Esophagus muscularis mucosa (tissue), 4 donors: ENCODE measurements at regions of chr2 and their contacts with region 1.

Region 1: GRCh38 chr2:74482801-74483674 is at the starts of genes CCDC142 and TTC31:
- DNase-seq: peak; percentile 99
- H3K4me3 ChIP-seq: peak within 1 kb of the TSS; percentile 89 to 99 (median 92)
- H3K27ac ChIP-seq: peak within 1 kb of the TSS; percentile 85 to 96 (median 88)
- H3K4me1 ChIP-seq: peaks cover 26 to 44% (median 39%) of the 10 kb centered on the region in 4 donors
- H3K27me3 ChIP-seq: no peaks in the 10 kb centered on the region
- CTCF ChIP-seq: peak; percentile 80 to 88 (median 85)
- EP300 ChIP-seq: no peak
- POLR2A ChIP-seq: no peak
- total RNA-seq, gene CCDC142: 9.6 to 27.8 (median 19.2) TPM
- total RNA-seq, gene TTC31: 17.4 to 23.0 (median 20.6) TPM

Region 2: GRCh38 chr2:74178201-74179062 is 304.6 kb before region 1 on chr2 and contains the start of gene MOB1A:
- intact Hi-C with region 1: no loop called
- DNase-seq: peak; percentile 99
- H3K4me3 ChIP-seq: peak within 1 kb of the TSS; percentile 86 to 94 (median 89)
- H3K27ac ChIP-seq: peak within 1 kb of the TSS; percentile 93 to 98 (median 96)
- H3K4me1 ChIP-seq: peaks cover 34 to 50% (median 47%) of the 10 kb centered on the region in 4 donors
- H3K27me3 ChIP-seq: no peaks in the 10 kb centered on the region
- CTCF ChIP-seq: no peak
- EP300 ChIP-seq: no peak
- POLR2A ChIP-seq: peak; percentile 66
- total RNA-seq, gene MOB1A: 102 to 129 (median 106) TPM

Region 3: DNA sequence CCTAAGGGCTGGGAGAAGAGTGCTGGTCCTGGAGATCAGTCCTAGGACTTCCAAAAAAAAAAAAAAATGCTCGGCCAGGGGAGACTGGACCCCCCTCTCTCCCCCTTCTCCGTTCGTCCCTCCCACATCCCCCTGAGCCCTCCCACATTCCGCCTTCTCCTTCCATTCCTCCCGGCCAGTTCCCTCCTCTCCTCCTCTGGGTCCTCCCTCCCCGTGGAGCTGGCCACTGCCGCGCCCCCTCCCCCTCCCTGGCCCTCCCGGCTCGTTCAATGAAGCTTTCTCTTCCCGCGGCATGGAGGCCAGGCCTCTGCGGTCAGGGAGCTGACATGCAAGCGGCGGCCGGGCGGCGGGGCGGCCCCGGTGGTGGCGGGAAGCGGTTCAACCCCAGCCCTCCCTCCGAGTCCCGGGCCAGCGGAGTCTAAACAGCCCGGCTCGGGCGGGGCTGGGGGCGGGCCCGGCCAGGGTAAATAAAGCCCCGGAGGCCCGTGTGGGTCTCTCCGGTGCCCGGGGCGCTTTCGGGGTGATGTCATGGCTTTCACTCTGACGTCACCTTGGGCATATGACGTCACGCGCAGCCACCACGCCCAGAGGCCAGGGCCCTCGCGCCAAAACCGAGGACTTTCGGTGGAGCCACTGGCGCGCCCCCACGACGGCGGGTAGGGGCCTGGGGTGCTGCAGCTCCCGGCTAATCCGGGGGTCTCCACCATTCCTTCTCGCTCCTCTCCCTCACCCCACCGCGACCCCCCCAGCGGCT is 71.0 kb after region 1 on chr2 and contains the start of gene LOXL3:
- intact Hi-C with region 1: loop called (anchors 1 kb)
- DNase-seq: peak; percentile 95
- H3K4me3 ChIP-seq: peak within 1 kb of the TSS; percentile 72 to 87 (median 80)
- H3K27ac ChIP-seq: peak within 1 kb of the TSS; percentile 90 to 93 (median 92)
- H3K4me1 ChIP-seq: peaks cover 15 to 50% (median 41%) of the 10 kb centered on the region in 4 donors
- H3K27me3 ChIP-seq: no peaks in the 10 kb centered on the region
- CTCF ChIP-seq: no peak
- EP300 ChIP-seq: no peak
- POLR2A ChIP-seq: no peak
- total RNA-seq, gene LOXL3: 7.1 to 8.6 (median 7.7) TPM

Region 4: DNA sequence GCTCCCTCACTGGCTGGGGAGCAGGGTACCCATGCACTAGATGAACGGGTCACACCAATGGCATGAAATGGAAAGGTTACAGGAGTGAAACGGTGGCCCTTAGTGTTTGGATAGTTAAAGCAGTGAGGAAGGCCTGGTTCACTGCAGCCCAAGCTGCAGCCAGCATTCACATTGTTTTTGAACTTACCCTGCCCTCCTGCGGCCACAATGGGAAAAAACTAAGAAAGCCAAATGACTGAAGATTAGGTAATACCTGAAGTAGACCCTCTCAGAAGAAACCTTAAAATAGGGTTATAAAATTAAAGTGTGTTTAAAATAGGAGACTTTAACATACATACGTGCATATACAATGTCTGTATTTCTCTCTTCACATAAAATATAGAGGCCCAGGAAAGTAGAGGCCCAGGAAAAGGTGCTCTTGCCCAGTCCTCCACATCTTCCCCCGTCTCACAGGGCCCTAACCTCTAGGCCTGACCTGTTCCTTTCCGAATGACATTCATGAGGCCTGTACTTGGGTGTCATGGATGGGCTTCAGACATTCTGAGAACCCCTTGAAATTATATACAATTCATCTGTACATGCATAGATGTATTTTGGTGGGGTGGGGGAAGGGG is 104.7 kb after region 1 on chr2:
- intact Hi-C with region 1: loop called (anchors 1 kb)
- DNase-seq: no peak
- H3K4me3 ChIP-seq: no peak overlapping the region
- H3K27ac ChIP-seq: no peak overlapping the region
- H3K4me1 ChIP-seq: peaks cover 0 to 5% (median 0%) of the 10 kb centered on the region in 4 donors
- H3K27me3 ChIP-seq: peaks cover 0 to 28% (median 0%) of the 10 kb centered on the region in 4 donors
- CTCF ChIP-seq: peak; percentile 71 to 80 (median 73)
- EP300 ChIP-seq: no peak
- POLR2A ChIP-seq: no peak